Tibial artery (tissue), 4 donors: ENCODE measurements at regions of chr1 and their contacts with region 1.

Region 1: DNA sequence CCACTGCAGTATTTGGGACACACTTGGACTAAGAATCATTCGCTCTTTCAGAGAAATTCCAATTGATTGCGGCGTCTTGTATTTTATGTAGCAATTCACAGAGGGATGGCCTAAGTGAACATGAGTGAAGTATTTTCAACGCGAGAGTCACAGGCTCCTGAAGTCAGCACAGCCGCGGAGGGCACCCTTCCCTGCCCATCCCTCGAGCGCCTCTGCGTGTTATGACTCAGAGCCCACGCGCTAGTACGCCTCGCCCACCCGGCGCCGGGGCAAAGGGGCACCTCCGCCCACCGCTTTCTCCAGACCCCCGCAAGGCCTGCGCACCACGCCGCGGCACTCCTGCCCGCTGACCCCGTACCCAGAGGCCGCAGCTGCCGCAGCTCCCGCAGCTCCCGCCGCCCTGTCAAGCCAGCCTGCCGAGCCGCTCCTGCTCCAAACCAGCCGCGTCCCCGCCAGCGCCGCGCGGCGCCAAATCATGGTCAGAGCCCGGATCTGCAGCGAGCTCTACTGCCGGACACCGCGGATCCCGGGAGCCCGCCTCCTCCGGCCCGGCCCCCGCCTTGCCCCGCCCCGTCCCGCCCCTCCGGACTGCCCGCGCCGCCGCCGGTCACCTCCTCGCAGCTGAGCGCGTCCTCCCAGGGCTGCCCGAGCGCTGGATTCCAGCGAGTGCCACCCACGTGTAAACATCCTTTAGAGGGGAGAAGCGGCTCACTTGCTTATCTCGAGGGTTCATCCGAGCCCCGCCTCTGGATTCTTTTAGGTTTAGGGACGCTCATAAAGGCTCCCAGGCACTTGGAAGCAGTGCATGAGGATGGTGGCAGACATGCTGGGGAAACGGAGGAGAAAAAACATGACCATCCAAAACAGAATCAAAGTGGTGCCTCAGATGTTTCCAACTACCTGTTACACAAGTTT is at the start of gene GLRX2:
- DNase-seq: peak; percentile 83 to 93
- H3K4me3 ChIP-seq: peak within 1 kb of the TSS; percentile 75 to 80
- H3K27ac ChIP-seq: peak within 1 kb of the TSS; percentile 93
- H3K4me1 ChIP-seq: peaks cover 0 to 25% (median 14%) of the 10 kb centered on the region in 4 donors
- H3K27me3 ChIP-seq: no peaks in the 10 kb centered on the region
- CTCF ChIP-seq: peak in 1 of 2 experiments; percentile 10

Region 2: GRCh38 chr1:193059268-193060225 is 45.6 kb before region 1 on chr1 and contains the starts of genes RO60 and UCHL5:
- intact Hi-C with region 1: loop called (anchors 5 kb)
- DNase-seq: peak; percentile 97 to 98
- H3K4me3 ChIP-seq: peak within 1 kb of the TSS; percentile 68 to 82
- H3K27ac ChIP-seq: peak within 1 kb of the TSS; percentile 94 to 97
- H3K4me1 ChIP-seq: peaks cover 0 to 54% (median 21%) of the 10 kb centered on the region in 4 donors
- H3K27me3 ChIP-seq: no peaks in the 10 kb centered on the region
- CTCF ChIP-seq: no peak

Region 3: GRCh38 chr1:193069748-193070385 is 35.3 kb before region 1 on chr1:
- intact Hi-C with region 1: no loop called
- DNase-seq: no peak
- H3K4me3 ChIP-seq: no peak overlapping the region
- H3K27ac ChIP-seq: no peak overlapping the region
- H3K4me1 ChIP-seq: peaks cover 0 to 50% (median 7%) of the 10 kb centered on the region in 4 donors
- H3K27me3 ChIP-seq: no peaks in the 10 kb centered on the region
- CTCF ChIP-seq: no peak

Region 4: GRCh38 chr1:193121616-193122593 is 16.7 kb after region 1 on chr1 and contains the start of gene CDC73:
- intact Hi-C with region 1: loop called (anchors 2 kb)
- DNase-seq: peak; percentile 98 to 99
- H3K4me3 ChIP-seq: peak within 1 kb of the TSS; percentile 67 to 80
- H3K27ac ChIP-seq: peak within 1 kb of the TSS; percentile 87 to 97
- H3K4me1 ChIP-seq: peaks cover 0 to 39% (median 15%) of the 10 kb centered on the region in 4 donors
- H3K27me3 ChIP-seq: no peaks in the 10 kb centered on the region
- CTCF ChIP-seq: peak; percentile 87 to 99